K562 (cell line): ENCODE measurements at regions of chr7 and their contacts with region 1.

Region 1: GRCh38 chr7:152899548-152900109 is 140.1 kb downstream of the ACTR3B start:
- DNase-seq: no peak
- ATAC-seq: no peak
- H3K4me3 ChIP-seq: no peak overlapping the region
- H3K27ac ChIP-seq: no peak overlapping the region
- H3K4me1 ChIP-seq: peaks cover 0 to 3% of the 10 kb centered on the region in 2 experiments; a peak in 1 of 5 replicates
- H3K27me3 ChIP-seq: peaks cover 92 to 96% of the 10 kb centered on the region in 2 experiments
- CTCF ChIP-seq: no peak
- EP300 ChIP-seq: no peak
- POLR2A ChIP-seq: no peak
- RAD21 ChIP-seq: no peak

Region 2: DNA sequence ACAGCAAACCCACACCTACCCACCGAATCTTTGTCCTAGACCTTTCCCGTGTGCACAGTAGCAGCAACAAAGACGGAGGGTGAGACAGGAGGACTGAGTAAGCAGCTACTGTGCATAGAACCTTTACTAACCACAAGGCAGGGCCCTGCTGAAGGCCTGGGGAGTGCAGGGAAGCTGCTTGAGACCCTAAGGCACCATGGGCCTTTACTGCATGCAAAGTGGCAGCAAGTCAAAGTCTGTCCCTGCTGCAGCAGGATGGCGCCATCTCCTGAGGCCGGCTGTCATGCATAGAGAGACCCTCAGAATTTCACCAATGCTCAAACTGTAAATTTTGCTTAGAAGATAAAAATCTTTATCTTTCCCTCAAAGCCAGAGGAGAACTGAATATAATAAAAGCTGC is 470.5 kb after region 1 on chr7:
- CTCF ChIA-PET with region 1: no interaction called
- POLR2A ChIA-PET with region 1: no interaction called
- in situ Hi-C with region 1: no loop called
- intact Hi-C with region 1: loop called (anchors 10 kb)
- DNase-seq: no peak
- ATAC-seq: peak; percentile 74
- H3K4me3 ChIP-seq: no peak overlapping the region
- H3K27ac ChIP-seq: no peak overlapping the region
- H3K4me1 ChIP-seq: peaks cover 2 to 3% of the 10 kb centered on the region in 2 experiments; a peak in 3 of 5 replicates
- H3K27me3 ChIP-seq: no peaks in the 10 kb centered on the region
- CTCF ChIP-seq: peak; percentile 17 to 33 (median 27); a peak in 2 of 6 replicates
- EP300 ChIP-seq: no peak
- POLR2A ChIP-seq: no peak
- RAD21 ChIP-seq: peak in 1 of 2 experiments; percentile 12; a peak in 1 of 4 replicates